ENCODE measurements at regions of chr9 and their contacts with region 1.

Region 1: GRCh38 chr9:85246541-85246940 is 495.2 kb downstream of the AGTPBP1 start:
- H3K4me3 ChIP-seq: no peak overlapping the region
- H3K27ac ChIP-seq: no peak overlapping the region
- H3K4me1 ChIP-seq: no peaks in the 10 kb centered on the region
- CTCF ChIP-seq: no peak

Region 2: DNA sequence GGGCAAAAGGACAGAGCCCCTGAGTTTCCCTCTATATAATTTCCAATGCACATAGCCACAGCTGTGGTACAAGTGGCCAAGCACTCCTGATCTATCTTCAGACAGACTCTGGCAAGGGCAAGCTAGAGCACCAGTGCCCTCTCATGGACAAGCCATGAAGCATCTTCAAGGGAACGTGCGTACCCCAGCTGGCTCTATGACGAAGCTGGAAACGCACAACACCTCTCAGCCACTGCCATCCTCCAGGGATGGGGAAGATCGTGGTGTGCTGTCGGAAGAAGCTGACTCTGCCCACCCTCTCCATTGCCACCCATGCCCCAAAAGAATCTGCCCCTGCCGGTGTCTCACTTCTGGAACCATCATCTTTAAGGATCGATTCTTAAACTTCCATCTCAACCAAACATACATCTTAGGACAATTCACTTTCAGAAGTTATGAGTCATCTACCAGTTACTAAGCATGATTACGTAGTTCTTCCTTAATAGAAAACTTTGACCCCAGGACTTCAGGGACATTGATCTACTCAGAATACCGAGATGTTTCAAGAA is 12.4 kb after region 1 on chr9:
- CTCF ChIA-PET with region 1: interaction called, 13 read pairs
- POLR2A ChIA-PET with region 1: interaction called, 3 read pairs
- H3K4me3 ChIP-seq: peak overlapping the region; percentile 28
- H3K27ac ChIP-seq: no peak overlapping the region
- H3K4me1 ChIP-seq: no peaks in the 10 kb centered on the region
- CTCF ChIP-seq: peak; percentile 92